GM23248 (cell line): ENCODE measurements at regions of chr4 and their contacts with region 1.

Region 1: DNA sequence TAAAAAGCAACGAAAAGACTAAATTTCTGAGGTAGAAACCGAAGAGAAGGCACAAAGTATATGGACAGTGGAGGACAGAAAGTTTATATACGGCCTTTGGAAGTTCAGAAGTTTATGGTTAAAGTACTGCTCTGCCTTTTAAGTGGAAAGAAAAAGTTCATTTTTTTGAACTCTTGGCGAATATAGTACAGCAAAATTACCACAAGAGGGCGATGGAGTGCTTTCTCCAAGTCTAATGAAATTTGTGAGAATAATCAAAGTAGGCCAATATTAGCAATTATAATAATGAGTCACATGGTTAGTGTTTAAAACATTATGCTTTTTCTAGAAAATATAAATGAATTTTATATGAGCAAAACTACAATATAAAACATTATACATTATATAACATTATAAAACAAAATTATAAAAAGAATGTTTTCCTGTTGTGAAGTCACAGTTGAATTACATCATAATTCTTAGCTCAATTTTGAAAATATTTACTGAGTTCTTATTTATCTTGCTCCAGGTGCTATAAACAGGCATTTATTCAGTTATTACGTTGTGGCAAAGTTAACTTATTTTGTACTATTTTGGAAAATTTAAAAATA is 136.2 kb upstream of the BMPR1B start:
- DNase-seq: peak; percentile 62
- H3K4me3 ChIP-seq: no peak overlapping the region
- H3K27ac ChIP-seq: no peak overlapping the region
- H3K4me1 ChIP-seq: peaks cover 2% of the 10 kb centered on the region; the same call in 1 of the 2 replicates
- H3K27me3 ChIP-seq: no peaks in the 10 kb centered on the region

Region 2: DNA sequence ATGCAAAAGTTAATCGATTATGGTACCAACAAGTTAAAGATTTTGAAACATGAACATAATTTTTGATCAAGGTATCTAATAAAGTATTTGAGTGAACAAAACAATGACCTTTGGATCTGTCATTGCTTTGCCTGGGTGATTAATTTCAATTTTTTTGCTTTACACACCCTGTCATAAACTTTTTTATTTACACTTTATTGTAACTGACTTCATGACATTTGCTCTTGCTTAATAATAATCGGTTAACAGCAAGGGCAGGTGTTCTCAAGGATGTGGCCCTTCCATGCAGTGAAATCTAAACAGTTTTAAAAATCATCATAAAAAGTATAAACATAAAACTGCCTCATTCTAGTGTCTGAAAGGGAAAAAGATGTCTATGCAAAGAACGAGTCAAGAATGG is 768.9 kb before region 1 on chr4:
- in situ Hi-C with region 1: no loop called
- DNase-seq: no peak
- H3K4me3 ChIP-seq: no peak overlapping the region
- H3K27ac ChIP-seq: no peak overlapping the region
- H3K4me1 ChIP-seq: no peaks in the 10 kb centered on the region
- H3K27me3 ChIP-seq: no peaks in the 10 kb centered on the region

Region 3: GRCh38 chr4:94722748-94723147 is 101.2 kb after region 1 on chr4:
- in situ Hi-C with region 1: loop called (anchors 10 kb)
- DNase-seq: no peak
- H3K4me3 ChIP-seq: no peak overlapping the region
- H3K27ac ChIP-seq: no peak overlapping the region
- H3K4me1 ChIP-seq: no peaks in the 10 kb centered on the region
- H3K27me3 ChIP-seq: no peaks in the 10 kb centered on the region

Region 4: GRCh38 chr4:94947681-94948108 is 326.1 kb after region 1 on chr4:
- in situ Hi-C with region 1: no loop called
- DNase-seq: no peak
- H3K4me3 ChIP-seq: no peak overlapping the region
- H3K27ac ChIP-seq: no peak overlapping the region
- H3K4me1 ChIP-seq: no peaks in the 10 kb centered on the region
- H3K27me3 ChIP-seq: no peaks in the 10 kb centered on the region

Region 5: DNA sequence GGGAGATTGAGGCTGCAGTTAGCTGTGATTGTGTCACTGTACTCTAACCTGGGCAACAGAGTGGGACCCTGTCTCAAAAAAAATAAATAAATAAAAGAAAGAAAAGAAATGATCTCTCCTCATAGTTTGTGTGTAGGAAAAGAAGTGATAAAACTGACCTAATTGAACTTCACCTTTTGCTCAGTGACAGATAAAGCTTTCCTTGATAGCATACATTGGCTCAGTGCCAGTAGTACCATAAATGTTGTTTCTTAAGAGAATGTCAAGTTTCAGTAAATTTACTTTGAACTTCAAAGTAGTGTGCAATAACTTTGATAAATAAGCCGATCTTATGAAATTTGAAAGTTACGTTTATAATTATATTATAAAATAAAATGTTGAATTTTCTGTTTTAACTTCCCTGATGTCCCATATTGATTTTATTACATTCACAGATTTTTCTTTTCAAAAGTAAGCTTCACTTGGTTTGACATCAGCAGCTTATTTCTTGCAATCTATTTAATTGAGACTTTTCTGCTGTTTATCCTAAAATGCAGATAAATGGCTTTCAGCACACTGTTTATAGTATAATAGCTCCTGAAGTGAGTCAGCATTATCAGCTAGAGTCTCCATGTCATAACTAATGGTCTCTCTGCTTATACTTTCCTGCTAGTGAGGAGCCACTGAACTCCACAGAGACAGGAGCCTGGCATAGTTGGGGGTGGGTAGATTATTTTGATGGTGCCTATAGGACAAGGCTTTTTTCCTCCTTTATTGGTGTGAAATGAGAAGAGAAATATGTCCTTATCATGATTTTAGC is 466.3 kb after region 1 on chr4:
- in situ Hi-C with region 1: loop called (anchors 10 kb)
- DNase-seq: peak; percentile 32
- H3K4me3 ChIP-seq: no peak overlapping the region
- H3K27ac ChIP-seq: no peak overlapping the region
- H3K4me1 ChIP-seq: 0 out of 2 replicates have a peak, but pooled peaks cover 6% of the 10 kb centered on the region
- H3K27me3 ChIP-seq: no peaks in the 10 kb centered on the region